Sigmoid colon (tissue), 7 donors: ENCODE measurements at regions of chr10 and their contacts with region 1.

Region 1: GRCh38 chr10:490891-491581 is 198.4 kb downstream of the DIP2C start:
- DNase-seq: peak; percentile 93
- H3K4me3 ChIP-seq: peak overlapping the region in 2 of 4 donors; percentile 9 to 17
- H3K27ac ChIP-seq: peak overlapping the region; percentile 82 to 96 (median 90)
- H3K4me1 ChIP-seq: peaks cover 0 to 84% (median 77%) of the 10 kb centered on the region in 4 donors
- H3K27me3 ChIP-seq: no peaks in the 10 kb centered on the region
- CTCF ChIP-seq: no peak
- EP300 ChIP-seq: peak; percentile 35 to 98 (median 78)
- POLR2A ChIP-seq: no peak

Region 2: GRCh38 chr10:451021-451471 is 40.0 kb before region 1 on chr10:
- intact Hi-C with region 1: loop called (anchors 5 kb)
- DNase-seq: no peak
- H3K4me3 ChIP-seq: no peak overlapping the region
- H3K27ac ChIP-seq: peak overlapping the region; percentile 11 to 83 (median 74)
- H3K4me1 ChIP-seq: peaks cover 0 to 52% (median 45%) of the 10 kb centered on the region in 4 donors
- H3K27me3 ChIP-seq: no peaks in the 10 kb centered on the region
- CTCF ChIP-seq: no peak
- EP300 ChIP-seq: no peak
- POLR2A ChIP-seq: no peak

Region 3: GRCh38 chr10:659688-660141 is 168.7 kb after region 1 on chr10:
- intact Hi-C with region 1: loop called (anchors 5 kb)
- DNase-seq: peak; percentile 53
- H3K4me3 ChIP-seq: no peak overlapping the region
- H3K27ac ChIP-seq: peak overlapping the region; percentile 76 to 90 (median 85)
- H3K4me1 ChIP-seq: peaks cover 0 to 86% (median 74%) of the 10 kb centered on the region in 4 donors
- H3K27me3 ChIP-seq: no peaks in the 10 kb centered on the region
- CTCF ChIP-seq: no peak
- EP300 ChIP-seq: peak in 3 of 4 donors; percentile 54 to 84 (median 62)
- POLR2A ChIP-seq: no peak

Region 4: DNA sequence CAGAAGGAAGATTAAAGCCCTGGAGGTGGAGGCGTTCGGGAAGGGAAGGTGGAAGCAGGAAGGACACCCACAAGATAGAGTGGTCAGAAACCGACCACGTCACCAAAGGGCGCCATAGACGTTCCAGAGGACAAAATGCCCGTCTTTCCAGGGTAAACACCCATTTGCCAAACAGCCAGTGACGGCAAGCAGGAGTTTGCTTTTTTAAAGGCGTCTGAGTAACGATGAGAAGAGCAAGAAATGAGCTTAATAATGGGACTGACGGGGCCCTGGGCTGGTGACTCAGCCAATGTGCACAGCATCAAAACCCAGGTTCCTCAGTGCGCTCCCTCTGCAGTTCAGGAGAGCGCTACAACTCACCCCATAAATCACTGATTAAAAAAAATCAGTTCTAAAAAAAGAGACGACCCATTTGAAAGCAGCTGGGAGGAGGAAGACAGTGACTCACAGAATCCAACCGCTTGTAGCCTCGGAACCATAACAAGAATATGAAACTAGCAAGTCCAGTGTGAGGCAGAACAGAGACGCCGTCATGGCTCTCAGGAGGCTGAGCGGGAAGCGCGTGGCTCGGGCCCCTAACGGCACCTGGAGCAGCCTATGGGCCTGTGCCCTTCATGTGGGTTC is 192.5 kb after region 1 on chr10:
- intact Hi-C with region 1: loop called (anchors 5 kb)
- DNase-seq: peak; percentile 91
- H3K4me3 ChIP-seq: peak overlapping the region in 3 of 4 donors; percentile 26 to 32 (median 31)
- H3K27ac ChIP-seq: peak overlapping the region; percentile 77 to 99 (median 92)
- H3K4me1 ChIP-seq: peaks cover 0 to 81% (median 65%) of the 10 kb centered on the region in 4 donors
- H3K27me3 ChIP-seq: no peaks in the 10 kb centered on the region
- CTCF ChIP-seq: no peak
- EP300 ChIP-seq: peak in 3 of 4 donors; percentile 91 to 94 (median 92)
- POLR2A ChIP-seq: peak in 1 of 2 donors; percentile 30